Transverse colon (tissue), 4 donors: ENCODE measurements at regions of chr5 and their contacts with region 1.

Region 1: GRCh38 chr5:157312492-157312891 is 46.6 kb downstream of the CYFIP2 start:
- DNase-seq: peak; percentile 47
- H3K4me3 ChIP-seq: no peak overlapping the region
- H3K27ac ChIP-seq: no peak overlapping the region
- H3K4me1 ChIP-seq: no peaks in the 10 kb centered on the region
- H3K27me3 ChIP-seq: no peaks in the 10 kb centered on the region
- CTCF ChIP-seq: peak; percentile 47 to 77 (median 64)
- EP300 ChIP-seq: no peak
- POLR2A ChIP-seq: no peak

Region 2: DNA sequence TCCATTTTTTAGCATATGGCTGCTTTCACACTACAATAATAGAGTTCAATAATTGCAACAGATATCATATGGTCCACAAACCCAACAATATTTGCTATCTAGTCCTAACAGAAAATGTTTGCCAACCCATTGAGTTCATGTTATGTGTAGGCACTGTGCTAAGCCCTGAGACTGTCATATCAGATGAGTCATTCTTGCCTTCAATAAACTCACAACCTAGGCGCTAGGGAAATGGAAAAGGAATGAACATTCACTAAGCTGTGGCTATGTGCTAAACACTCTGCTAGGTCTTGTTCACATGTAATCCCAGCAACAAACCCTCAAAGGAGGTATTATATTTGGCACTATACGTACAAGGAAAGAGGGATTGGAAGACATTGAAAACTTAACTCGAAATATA is 341.1 kb before region 1 on chr5:
- in situ Hi-C with region 1: no loop called
- intact Hi-C with region 1: no loop called
- DNase-seq: no peak
- H3K4me3 ChIP-seq: no peak overlapping the region
- H3K27ac ChIP-seq: no peak overlapping the region
- H3K4me1 ChIP-seq: no peaks in the 10 kb centered on the region
- H3K27me3 ChIP-seq: no peaks in the 10 kb centered on the region
- CTCF ChIP-seq: no peak
- EP300 ChIP-seq: no peak
- POLR2A ChIP-seq: no peak

Region 3: GRCh38 chr5:157030692-157031091 is 281.8 kb before region 1 on chr5:
- in situ Hi-C with region 1: no loop called
- intact Hi-C with region 1: no loop called
- DNase-seq: no peak
- H3K4me3 ChIP-seq: no peak overlapping the region
- H3K27ac ChIP-seq: no peak overlapping the region
- H3K4me1 ChIP-seq: peaks cover 0 to 44% (median 11%) of the 10 kb centered on the region in 4 donors
- H3K27me3 ChIP-seq: no peaks in the 10 kb centered on the region
- CTCF ChIP-seq: no peak
- EP300 ChIP-seq: no peak
- POLR2A ChIP-seq: no peak

Region 4: DNA sequence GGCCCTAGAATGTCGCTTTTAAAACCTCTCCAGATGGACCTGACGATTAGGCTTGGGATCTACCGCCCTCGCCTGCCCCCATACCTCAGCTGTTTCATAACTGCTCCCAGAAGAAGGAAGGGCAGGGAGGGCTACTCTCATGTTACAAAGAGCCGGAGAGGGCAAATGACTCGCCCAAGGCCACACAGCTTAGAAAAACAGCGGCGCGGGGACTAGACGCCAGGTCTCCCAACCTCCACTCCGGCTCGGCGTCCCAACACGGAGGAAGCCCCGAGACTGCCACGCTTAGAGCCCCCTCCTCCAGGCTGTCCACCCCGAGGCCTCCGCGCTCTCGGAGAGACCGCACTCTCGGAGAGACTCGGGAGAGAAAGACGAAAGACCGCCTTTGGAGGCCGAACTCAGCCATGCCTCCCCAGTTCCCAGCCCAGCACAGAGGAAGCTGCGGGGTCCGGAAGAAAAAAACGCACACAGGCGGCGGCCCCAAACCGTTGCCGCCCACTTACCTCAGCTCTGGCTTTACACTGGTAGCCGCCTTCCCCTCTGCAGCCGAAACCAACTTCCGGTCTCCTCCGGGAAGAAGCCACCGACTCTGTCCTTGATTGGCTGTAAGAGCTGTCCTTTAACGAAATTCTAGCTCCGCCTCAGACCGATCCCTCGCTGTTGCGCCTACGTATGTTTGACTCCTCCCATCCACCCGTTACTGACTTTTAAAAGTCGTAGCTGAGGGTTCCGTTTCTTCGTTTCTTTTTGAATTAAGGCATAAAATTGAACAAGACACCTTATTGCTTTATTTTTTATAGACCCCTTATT is 170.0 kb before region 1 on chr5 and contains the start of gene MED7:
- in situ Hi-C with region 1: loop called in 1 of 4 experiments (anchors 10 kb)
- intact Hi-C with region 1: no loop called
- DNase-seq: peak; percentile 94
- H3K4me3 ChIP-seq: peak within 1 kb of the TSS; percentile 79 to 100 (median 90)
- H3K27ac ChIP-seq: peak within 1 kb of the TSS; percentile 89 to 99 (median 94)
- H3K4me1 ChIP-seq: peaks cover 7 to 24% (median 12%) of the 10 kb centered on the region in 4 donors
- H3K27me3 ChIP-seq: no peaks in the 10 kb centered on the region
- CTCF ChIP-seq: no peak
- EP300 ChIP-seq: no peak
- POLR2A ChIP-seq: peak; percentile 89
- total RNA-seq, gene MED7: 10.0 to 12.1 (median 11.0) TPM in 3 of 4 donors, not detected in the other

Region 5: DNA sequence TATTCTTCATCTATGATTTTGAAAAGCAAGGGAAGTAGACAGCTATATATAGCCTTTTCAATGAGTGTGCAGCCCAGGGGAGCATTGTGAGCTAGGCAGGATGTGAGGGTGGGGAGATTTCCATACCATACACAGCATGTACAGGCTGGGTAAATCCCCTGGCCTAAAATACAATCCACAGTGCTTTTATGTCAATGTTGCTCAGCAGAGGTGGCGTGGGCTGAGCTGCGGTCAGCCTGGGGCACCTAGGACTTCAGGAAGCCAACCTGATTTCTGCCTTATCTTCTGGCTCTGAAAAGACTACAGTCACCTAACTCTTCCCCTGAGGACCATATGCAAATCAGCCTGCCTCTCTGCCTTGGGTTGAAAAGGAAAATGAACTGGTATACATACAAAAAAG is 140.1 kb before region 1 on chr5:
- in situ Hi-C with region 1: loop called in 1 of 4 experiments (anchors 25 kb)
- intact Hi-C with region 1: no loop called
- DNase-seq: peak; percentile 12
- H3K4me3 ChIP-seq: no peak overlapping the region
- H3K27ac ChIP-seq: no peak overlapping the region
- H3K4me1 ChIP-seq: no peaks in the 10 kb centered on the region
- H3K27me3 ChIP-seq: no peaks in the 10 kb centered on the region
- CTCF ChIP-seq: no peak
- EP300 ChIP-seq: no peak
- POLR2A ChIP-seq: no peak

Region 6: GRCh38 chr5:157204765-157205164 is 107.7 kb before region 1 on chr5:
- in situ Hi-C with region 1: no loop called
- intact Hi-C with region 1: no loop called
- DNase-seq: no peak
- H3K4me3 ChIP-seq: no peak overlapping the region
- H3K27ac ChIP-seq: no peak overlapping the region
- H3K4me1 ChIP-seq: no peaks in the 10 kb centered on the region
- H3K27me3 ChIP-seq: no peaks in the 10 kb centered on the region
- CTCF ChIP-seq: no peak
- EP300 ChIP-seq: no peak
- POLR2A ChIP-seq: no peak

Region 7: DNA sequence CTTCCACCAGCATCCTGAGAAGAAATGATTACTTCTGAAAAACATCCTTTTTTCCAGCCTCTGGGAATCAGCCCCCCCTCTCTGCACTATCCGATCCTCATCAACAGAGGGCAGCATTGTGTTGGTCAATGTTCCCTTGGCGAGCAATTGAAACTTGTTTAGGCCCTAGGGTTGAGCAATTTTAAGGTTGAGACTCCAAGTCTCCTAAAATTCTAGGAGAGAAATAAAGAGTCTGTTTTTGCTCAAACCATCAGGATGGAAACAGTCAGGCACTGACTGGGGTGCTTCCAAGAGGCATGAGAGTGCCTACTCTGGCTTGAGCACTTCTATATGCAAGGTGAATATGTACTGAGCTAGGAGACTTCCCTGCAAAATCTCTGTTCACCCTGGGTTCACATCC is 58.9 kb before region 1 on chr5:
- in situ Hi-C with region 1: loop called in 1 of 4 experiments (anchors 5 kb)
- intact Hi-C with region 1: loop called (anchors 10 kb)
- DNase-seq: peak; percentile 58
- H3K4me3 ChIP-seq: no peak overlapping the region
- H3K27ac ChIP-seq: no peak overlapping the region
- H3K4me1 ChIP-seq: peaks cover 0 to 18% (median 3%) of the 10 kb centered on the region in 4 donors
- H3K27me3 ChIP-seq: no peaks in the 10 kb centered on the region
- CTCF ChIP-seq: peak; percentile 80 to 85 (median 82)
- EP300 ChIP-seq: no peak
- POLR2A ChIP-seq: no peak

Region 8: GRCh38 chr5:157259699-157260098 is 52.8 kb before region 1 on chr5:
- in situ Hi-C with region 1: loop called in 1 of 4 experiments (anchors 5 kb)
- intact Hi-C with region 1: loop called (anchors 10 kb)
- DNase-seq: no peak
- H3K4me3 ChIP-seq: no peak overlapping the region
- H3K27ac ChIP-seq: no peak overlapping the region
- H3K4me1 ChIP-seq: peaks cover 0 to 13% (median 6%) of the 10 kb centered on the region in 4 donors
- H3K27me3 ChIP-seq: no peaks in the 10 kb centered on the region
- CTCF ChIP-seq: no peak
- EP300 ChIP-seq: no peak
- POLR2A ChIP-seq: no peak

Region 9: DNA sequence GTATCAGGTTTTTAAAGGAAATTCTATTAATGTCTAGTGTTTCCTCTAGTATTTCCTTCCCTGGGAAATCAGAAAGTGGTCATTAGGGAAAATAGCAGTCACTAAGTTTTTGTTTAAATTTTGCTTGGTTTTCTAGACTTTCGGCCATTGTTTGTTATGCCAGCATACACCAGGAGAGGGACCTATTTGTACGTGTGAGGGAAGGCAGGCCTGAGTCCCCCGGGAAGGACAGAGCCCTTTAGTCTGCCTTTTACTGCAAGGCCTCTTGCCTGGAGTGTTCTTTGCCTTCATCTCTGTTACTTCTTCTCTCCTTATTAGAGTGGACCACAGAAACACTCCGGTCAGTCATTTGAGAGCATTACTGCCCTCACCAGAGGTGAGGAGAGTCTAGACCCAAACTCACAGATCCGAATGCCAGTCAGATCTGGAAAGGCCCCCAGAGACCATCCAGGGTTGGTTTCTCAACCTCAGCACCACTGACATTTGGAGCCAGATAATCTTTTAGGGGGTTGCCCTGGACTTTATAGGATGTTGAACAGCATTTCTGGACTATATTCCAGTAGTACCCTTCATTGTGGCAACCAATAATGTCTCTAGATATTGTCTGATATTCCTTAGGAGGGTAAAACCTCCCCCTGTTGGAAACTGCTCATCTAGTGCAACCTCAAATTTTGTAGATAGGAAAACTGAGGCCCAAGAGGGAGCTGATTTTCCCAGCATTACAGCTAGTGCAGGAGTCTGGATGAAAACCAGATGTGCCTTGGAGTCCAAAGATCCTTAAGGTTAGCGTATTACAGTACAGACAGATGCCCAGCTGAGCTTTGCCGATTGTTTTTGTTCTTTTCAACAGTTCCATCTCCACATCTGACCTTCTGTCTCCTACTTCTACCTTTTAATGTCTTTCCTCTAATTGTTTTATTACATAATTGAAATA is 54.5 kb after region 1 on chr5:
- in situ Hi-C with region 1: no loop called
- intact Hi-C with region 1: no loop called
- DNase-seq: no peak
- H3K4me3 ChIP-seq: no peak overlapping the region
- H3K27ac ChIP-seq: peak overlapping the region; percentile 56 to 80 (median 72)
- H3K4me1 ChIP-seq: peaks cover 0 to 18% (median 0%) of the 10 kb centered on the region in 4 donors
- H3K27me3 ChIP-seq: no peaks in the 10 kb centered on the region
- CTCF ChIP-seq: peak; percentile 23 to 52 (median 32)
- EP300 ChIP-seq: no peak
- POLR2A ChIP-seq: no peak